ENCODE measurements at regions of chr19 and their contacts with region 1.

Region 1: DNA sequence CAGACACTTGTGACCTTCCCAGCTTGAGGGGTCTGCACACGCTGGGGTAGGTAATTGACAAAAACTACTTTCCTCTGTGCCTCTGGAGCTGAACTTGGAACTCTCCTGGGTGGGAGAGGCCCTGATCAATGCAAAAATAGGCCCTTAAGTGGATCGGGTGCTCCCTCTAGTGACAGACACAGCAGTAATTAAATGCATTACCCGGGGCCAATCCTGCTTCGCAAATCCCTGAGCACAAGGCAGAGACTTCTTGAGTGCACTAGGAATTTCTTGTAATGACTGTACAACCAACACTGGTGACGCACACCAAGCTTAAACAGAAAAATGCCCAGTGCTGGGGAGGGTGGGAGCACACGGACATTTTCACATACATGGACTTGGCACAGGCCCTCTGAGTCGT is 10.6 kb upstream of the UBE2S start:
- DNase-seq: peak in 2 of 5 donors; percentile 31 to 53
- H3K4me3 ChIP-seq: no peak overlapping the region
- H3K27ac ChIP-seq: no peak overlapping the region
- H3K4me1 ChIP-seq: no peaks in the 10 kb centered on the region
- H3K27me3 ChIP-seq: no peaks in the 10 kb centered on the region
- CTCF ChIP-seq: peak; percentile 21 to 53 (median 29)
- EP300 ChIP-seq: no peak
- POLR2A ChIP-seq: no peak

Region 2: DNA sequence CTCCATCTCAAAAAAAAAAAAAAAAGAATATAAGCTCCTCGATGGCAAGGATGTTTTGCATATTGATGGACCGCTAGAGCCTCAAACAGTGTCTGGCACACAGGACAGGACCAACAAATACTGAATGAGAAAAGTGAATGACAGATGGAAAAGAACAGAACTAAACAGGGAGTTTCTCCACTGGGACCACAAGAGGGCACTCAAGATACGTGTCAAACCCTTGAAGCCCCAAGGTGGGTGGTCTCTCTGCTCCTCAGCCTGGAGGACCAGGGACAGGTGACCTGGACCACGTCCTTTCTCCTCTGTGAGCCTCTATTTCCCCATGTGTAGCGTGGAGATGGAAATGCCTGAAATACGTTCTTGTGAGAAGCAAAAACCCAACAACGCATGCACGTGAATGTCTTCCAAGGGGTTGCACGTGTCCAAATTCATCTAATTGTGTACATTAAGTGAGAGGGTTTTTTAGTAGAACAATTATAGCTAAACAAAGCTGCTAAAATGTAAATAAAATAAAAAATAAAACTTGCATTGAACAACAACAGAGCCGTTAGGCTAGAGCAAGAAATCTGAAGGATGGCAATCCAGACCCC is 939.4 kb before region 1 on chr19:
- intact Hi-C with region 1: loop called in 1 of 4 experiments (anchors 10 kb)
- DNase-seq: no peak
- H3K4me3 ChIP-seq: no peak overlapping the region
- H3K27ac ChIP-seq: no peak overlapping the region
- H3K4me1 ChIP-seq: no peaks in the 10 kb centered on the region
- H3K27me3 ChIP-seq: no peaks in the 10 kb centered on the region
- CTCF ChIP-seq: peak in 1 of 3 donors; percentile 16
- EP300 ChIP-seq: no peak
- POLR2A ChIP-seq: no peak

Region 3: GRCh38 chr19:55146078-55146704 is 272.0 kb before region 1 on chr19:
- intact Hi-C with region 1: loop called in 1 of 4 experiments (anchors 5 kb)
- DNase-seq: no peak
- H3K4me3 ChIP-seq: no peak overlapping the region
- H3K27ac ChIP-seq: no peak overlapping the region
- H3K4me1 ChIP-seq: no peaks in the 10 kb centered on the region
- H3K27me3 ChIP-seq: peaks cover 5% of the 10 kb centered on the region
- CTCF ChIP-seq: no peak
- EP300 ChIP-seq: no peak
- POLR2A ChIP-seq: no peak

Region 4: GRCh38 chr19:55279770-55280643 is 138.2 kb before region 1 on chr19 and contains the start of gene HSPBP1:
- intact Hi-C with region 1: loop called in 1 of 4 experiments (anchors 10 kb)
- DNase-seq: peak; percentile 92 to 97 (median 95)
- H3K4me3 ChIP-seq: peak within 1 kb of the TSS; percentile 77
- H3K27ac ChIP-seq: peak within 1 kb of the TSS; percentile 53 to 73
- H3K4me1 ChIP-seq: peaks cover 5% of the 10 kb centered on the region
- H3K27me3 ChIP-seq: no peaks in the 10 kb centered on the region
- CTCF ChIP-seq: peak in 1 of 3 donors; percentile 13
- EP300 ChIP-seq: no peak
- POLR2A ChIP-seq: peak; percentile 40
- total RNA-seq, gene HSPBP1: 20.5 to 40.7 (median 31.8) TPM

Region 5: GRCh38 chr19:55339048-55339888 is 78.9 kb before region 1 on chr19 and contains the start of gene KMT5C:
- intact Hi-C with region 1: no loop called
- DNase-seq: peak; percentile 100
- H3K4me3 ChIP-seq: peak within 1 kb of the TSS; percentile 93
- H3K27ac ChIP-seq: peak within 1 kb of the TSS; percentile 66 to 70
- H3K4me1 ChIP-seq: peaks cover 9% of the 10 kb centered on the region
- H3K27me3 ChIP-seq: no peaks in the 10 kb centered on the region
- CTCF ChIP-seq: peak; percentile 36 to 85 (median 77)
- EP300 ChIP-seq: no peak
- POLR2A ChIP-seq: peak; percentile 87
- total RNA-seq, gene KMT5C: 8.1 to 26.2 (median 12.6) TPM

Region 6: GRCh38 chr19:55930996-55931515 is 512.9 kb after region 1 on chr19:
- intact Hi-C with region 1: no loop called
- DNase-seq: no peak
- H3K4me3 ChIP-seq: no peak overlapping the region
- H3K27ac ChIP-seq: no peak overlapping the region
- H3K4me1 ChIP-seq: no peaks in the 10 kb centered on the region
- H3K27me3 ChIP-seq: no peaks in the 10 kb centered on the region
- CTCF ChIP-seq: no peak
- EP300 ChIP-seq: no peak
- POLR2A ChIP-seq: no peak